CD4-positive, alpha-beta T cell (primary cell): ENCODE measurements at regions of chr12 and their contacts with region 1.

Region 1: DNA sequence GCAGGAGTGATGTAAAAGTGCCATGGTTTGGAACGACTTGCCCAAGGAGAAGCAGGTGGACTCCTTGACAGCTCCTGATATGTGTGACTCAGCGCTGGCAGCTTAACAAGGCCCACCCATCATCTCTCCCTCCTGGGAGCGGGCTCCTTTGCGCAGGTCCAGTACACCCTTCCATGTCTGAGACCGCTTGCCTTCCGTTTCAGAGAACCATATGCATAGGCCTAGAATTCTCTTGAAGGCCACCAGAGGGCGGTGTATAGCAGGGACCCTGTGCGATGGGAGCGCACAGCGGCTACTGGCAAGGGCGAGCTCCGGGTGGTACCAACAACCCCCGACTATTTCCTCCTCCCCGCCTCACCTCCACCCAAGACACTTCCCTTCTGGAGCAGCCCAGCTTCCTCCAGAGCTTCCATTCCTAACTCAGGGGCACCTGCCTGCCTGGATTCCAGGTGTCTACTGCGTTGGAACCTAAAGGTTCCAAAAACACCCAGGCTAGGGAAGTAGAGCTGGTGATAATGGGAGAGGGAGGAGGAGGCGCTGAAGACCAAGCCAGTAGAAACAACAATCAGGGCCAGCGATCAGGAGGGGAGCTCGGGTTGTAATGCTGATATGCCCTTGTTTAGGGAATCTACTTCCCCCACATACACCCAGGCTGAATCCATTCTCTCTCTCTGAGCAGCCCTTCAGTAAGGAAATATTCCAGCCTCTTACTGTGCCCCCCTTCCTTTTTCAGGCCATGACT is 6.2 kb downstream of the DHH start:
- DNase-seq: peak; percentile 43 to 90 (median 58)
- ATAC-seq: peak; percentile 82
- H3K4me3 ChIP-seq: no peak overlapping the region
- H3K4me3 Mint-ChIP-seq: peak overlapping the region; percentile 60
- H3K27ac ChIP-seq: no peak overlapping the region
- H3K27ac Mint-ChIP-seq: no peak overlapping the region
- H3K4me1 ChIP-seq: peaks cover 55% of the 10 kb centered on the region
- H3K4me1 Mint-ChIP-seq: peaks cover 52% of the 10 kb centered on the region
- H3K27me3 ChIP-seq: peaks cover 48 to 51% of the 10 kb centered on the region in 2 experiments
- H3K27me3 Mint-ChIP-seq: peaks cover 62% of the 10 kb centered on the region
- CTCF ChIP-seq: peak; percentile 85

Region 2: GRCh38 chr12:48995061-48995879 is 93.1 kb before region 1 on chr12:
- CTCF ChIA-PET with region 1: interaction called, 3 read pairs
- POLR2A ChIA-PET with region 1: no interaction called
- intact Hi-C with region 1: loop called in 1 of 2 experiments (anchors 2 kb)
- DNase-seq: peak in 7 of 14 experiments; percentile 40 to 73 (median 56)
- ATAC-seq: peak; percentile 28
- H3K4me3 ChIP-seq: no peak overlapping the region
- H3K4me3 Mint-ChIP-seq: peak overlapping the region; percentile 61
- H3K27ac ChIP-seq: no peak overlapping the region
- H3K27ac Mint-ChIP-seq: no peak overlapping the region
- H3K4me1 ChIP-seq: peaks cover 46% of the 10 kb centered on the region
- H3K4me1 Mint-ChIP-seq: peaks cover 44% of the 10 kb centered on the region
- H3K27me3 ChIP-seq: peaks cover 53 to 56% of the 10 kb centered on the region in 2 experiments
- H3K27me3 Mint-ChIP-seq: peaks cover 73% of the 10 kb centered on the region
- CTCF ChIP-seq: peak; percentile 83

Region 3: DNA sequence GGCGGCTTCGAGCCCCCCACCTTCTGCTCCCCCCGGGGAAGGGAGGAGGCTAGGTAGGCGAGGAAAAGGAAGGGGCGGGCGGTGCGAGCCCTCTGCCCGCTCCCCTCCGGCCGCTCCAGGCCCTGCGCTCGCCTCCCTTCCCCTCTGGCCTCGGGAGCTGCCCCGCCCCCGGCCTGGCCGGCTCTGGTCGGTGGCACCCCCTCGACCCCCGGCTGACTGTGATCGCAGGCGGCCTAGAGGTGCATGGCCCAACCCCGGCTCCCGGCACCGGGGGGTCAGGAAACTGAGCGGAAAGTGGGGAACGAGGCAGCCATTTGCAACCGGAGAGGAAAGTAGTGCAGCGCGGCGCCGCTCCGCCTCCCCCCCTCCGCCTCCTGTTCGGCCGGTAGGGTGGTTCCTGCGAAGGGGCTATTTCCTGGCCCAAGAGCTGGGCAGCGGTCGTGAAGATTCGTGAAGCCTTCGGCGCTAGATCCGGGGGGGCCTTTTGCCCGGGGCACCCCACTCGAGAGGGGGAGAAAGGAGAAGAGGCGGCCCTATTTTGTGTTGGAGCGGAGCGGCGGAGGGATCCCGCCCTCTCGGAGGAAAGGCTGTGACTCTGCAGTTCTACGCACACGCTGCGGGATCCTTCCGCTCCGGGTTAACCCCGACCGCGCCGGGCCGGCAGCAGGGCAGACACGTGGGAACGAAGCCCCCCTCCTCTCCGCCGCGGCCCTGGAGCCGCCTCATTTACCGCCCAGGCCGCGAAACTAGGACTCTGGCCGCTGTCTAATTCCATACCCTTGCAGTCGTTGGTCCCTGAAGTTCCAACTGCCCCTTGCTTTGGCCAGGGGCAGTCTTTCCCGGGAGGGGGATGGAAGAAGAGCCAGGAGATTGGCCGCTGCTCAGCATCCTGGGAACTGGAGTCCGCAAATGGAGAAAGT is 27.9 kb before region 1 on chr12 and contains the start of gene KMT2D:
- CTCF ChIA-PET with region 1: interaction called, 29 read pairs
- POLR2A ChIA-PET with region 1: interaction called, 12 read pairs
- intact Hi-C with region 1: loop called (anchors 2 kb)
- DNase-seq: peak; percentile 78 to 95 (median 86)
- ATAC-seq: peak; percentile 68
- H3K4me3 ChIP-seq: peak within 1 kb of the TSS; percentile 96
- H3K4me3 Mint-ChIP-seq: peak within 1 kb of the TSS; percentile 97
- H3K27ac ChIP-seq: peak within 1 kb of the TSS; percentile 90 to 93
- H3K27ac Mint-ChIP-seq: peak within 1 kb of the TSS; percentile 96
- H3K4me1 ChIP-seq: peaks cover 56% of the 10 kb centered on the region
- H3K4me1 Mint-ChIP-seq: peaks cover 55% of the 10 kb centered on the region
- H3K27me3 ChIP-seq: no peaks in the 10 kb centered on the region
- H3K27me3 Mint-ChIP-seq: no peaks in the 10 kb centered on the region
- CTCF ChIP-seq: no peak
- total RNA-seq, gene KMT2D: 107 to 110 TPM

Region 4: DNA sequence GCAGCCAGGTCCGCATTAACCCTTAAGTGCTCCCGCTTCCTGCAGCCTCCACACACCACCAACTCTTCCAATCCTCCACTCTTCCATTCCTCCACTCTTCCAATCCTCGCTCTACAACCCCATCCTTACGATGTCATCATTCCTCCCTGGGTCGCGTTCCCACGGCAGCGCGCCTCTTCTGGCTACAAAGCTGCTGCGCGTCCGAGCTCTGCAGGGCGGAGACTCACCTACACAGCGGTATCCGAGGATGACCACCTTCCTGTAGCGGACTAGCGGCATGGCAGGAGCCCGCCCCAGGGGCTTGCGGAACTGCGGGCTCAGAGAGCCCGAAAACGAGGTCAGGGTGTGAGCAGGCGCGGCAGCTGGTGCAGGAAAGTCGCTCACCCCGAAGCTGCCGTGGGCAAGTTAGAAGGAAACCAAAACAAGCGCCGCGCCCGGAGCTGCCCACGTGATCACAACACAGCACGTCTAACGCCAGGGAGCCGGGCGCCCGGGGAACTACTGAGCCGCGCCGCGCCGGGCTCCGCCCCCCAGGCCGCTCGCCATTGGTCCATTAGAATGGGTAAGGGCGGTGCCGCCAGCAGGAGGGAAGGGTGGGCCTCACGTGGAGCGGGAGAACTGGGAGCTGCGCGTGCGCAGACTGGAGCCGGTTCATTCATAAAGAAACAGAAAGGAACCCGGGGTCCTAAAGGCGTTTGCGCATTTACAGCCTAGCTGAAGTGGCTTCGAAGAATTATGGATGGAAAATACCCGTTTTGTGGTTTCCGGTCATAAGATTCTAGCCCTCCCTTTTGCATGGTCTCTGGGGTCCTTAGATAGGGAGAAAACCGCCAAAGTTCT is 18.6 kb before region 1 on chr12 and contains the start of gene RHEBL1:
- CTCF ChIA-PET with region 1: interaction called, 29 read pairs
- POLR2A ChIA-PET with region 1: interaction called, 15 read pairs
- intact Hi-C with region 1: loop called (anchors 2 kb)
- DNase-seq: peak; percentile 95 to 99 (median 97)
- ATAC-seq: peak; percentile 98
- H3K4me3 ChIP-seq: peak within 1 kb of the TSS; percentile 97
- H3K4me3 Mint-ChIP-seq: peak within 1 kb of the TSS; percentile 97
- H3K27ac ChIP-seq: peak within 1 kb of the TSS; percentile 61 to 76
- H3K27ac Mint-ChIP-seq: peak within 1 kb of the TSS; percentile 92
- H3K4me1 ChIP-seq: peaks cover 14% of the 10 kb centered on the region
- H3K4me1 Mint-ChIP-seq: peaks cover 21% of the 10 kb centered on the region
- H3K27me3 ChIP-seq: no peaks in the 10 kb centered on the region
- H3K27me3 Mint-ChIP-seq: peaks cover 3% of the 10 kb centered on the region
- CTCF ChIP-seq: no peak
- total RNA-seq, gene RHEBL1: 5.1 to 6.0 TPM

Region 5: GRCh38 chr12:49110464-49111155 is 22.2 kb after region 1 on chr12 and contains the start of gene LMBR1L:
- CTCF ChIA-PET with region 1: interaction called, 20 read pairs
- POLR2A ChIA-PET with region 1: interaction called, 37 read pairs
- intact Hi-C with region 1: no loop called
- DNase-seq: peak; percentile 92 to 99 (median 95)
- ATAC-seq: peak; percentile 91
- H3K4me3 ChIP-seq: peak within 1 kb of the TSS; percentile 75
- H3K4me3 Mint-ChIP-seq: peak within 1 kb of the TSS; percentile 89
- H3K27ac ChIP-seq: peak within 1 kb of the TSS; percentile 85 to 94
- H3K27ac Mint-ChIP-seq: peak within 1 kb of the TSS; percentile 97
- H3K4me1 ChIP-seq: peaks cover 41% of the 10 kb centered on the region
- H3K4me1 Mint-ChIP-seq: peaks cover 35% of the 10 kb centered on the region
- H3K27me3 ChIP-seq: no peaks in the 10 kb centered on the region
- H3K27me3 Mint-ChIP-seq: no peaks in the 10 kb centered on the region
- CTCF ChIP-seq: peak; percentile 61
- total RNA-seq, gene LMBR1L: 401 to 418 TPM

Region 6: DNA sequence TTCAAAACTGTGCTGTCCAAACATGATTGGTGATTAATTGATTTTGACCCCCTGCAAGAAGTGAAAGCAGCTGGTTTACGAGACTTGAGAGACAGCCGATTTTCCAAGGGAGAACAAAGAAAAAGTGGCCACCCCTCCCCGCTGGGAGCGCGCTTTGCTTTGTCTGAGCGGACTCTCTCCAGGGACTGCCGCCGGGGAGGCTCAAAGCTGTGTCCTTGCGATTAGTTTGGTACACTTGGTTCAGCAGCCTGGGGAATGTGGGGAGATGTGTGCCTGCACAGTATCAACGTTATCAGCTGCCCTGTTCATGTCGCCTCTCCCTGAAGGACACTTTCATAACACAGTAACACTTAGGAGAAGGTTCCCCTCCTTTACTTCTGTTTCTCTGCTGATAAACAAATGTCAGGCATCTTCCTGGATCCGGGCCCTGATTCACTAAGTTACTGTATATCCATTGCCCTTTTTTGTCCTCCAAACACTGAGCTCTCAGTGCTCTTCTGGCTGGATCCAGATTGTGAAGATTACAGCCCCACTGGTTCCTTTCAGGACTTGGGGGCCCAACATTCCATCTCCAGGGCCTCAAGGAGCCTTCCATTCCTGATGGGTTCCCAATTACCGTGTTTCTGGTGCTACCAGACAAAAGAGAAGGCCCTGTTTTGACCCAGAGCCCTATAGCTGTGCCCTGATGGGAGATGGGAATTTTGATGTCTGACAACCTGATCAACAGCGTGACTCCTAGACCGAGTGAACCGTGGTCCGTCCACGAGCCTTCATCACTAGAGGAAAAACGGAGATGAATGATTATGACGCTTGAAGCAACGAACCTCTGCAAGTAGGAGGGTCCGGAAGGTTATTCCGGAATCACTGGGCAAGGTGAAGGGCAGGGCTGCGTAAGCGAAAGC is 144.8 kb after region 1 on chr12:
- CTCF ChIA-PET with region 1: interaction called, 10 read pairs
- POLR2A ChIA-PET with region 1: interaction called, 15 read pairs
- intact Hi-C with region 1: loop called (anchors 1 kb)
- DNase-seq: no peak
- ATAC-seq: no peak
- H3K4me3 ChIP-seq: no peak overlapping the region
- H3K4me3 Mint-ChIP-seq: peak overlapping the region; percentile 67
- H3K27ac ChIP-seq: peak overlapping the region in 1 of 2 donors; percentile 26
- H3K27ac Mint-ChIP-seq: peak overlapping the region; percentile 79
- H3K4me1 ChIP-seq: peaks cover 17% of the 10 kb centered on the region
- H3K4me1 Mint-ChIP-seq: peaks cover 15% of the 10 kb centered on the region
- H3K27me3 ChIP-seq: no peaks in the 10 kb centered on the region
- H3K27me3 Mint-ChIP-seq: no peaks in the 10 kb centered on the region
- CTCF ChIP-seq: no peak

Region 7: DNA sequence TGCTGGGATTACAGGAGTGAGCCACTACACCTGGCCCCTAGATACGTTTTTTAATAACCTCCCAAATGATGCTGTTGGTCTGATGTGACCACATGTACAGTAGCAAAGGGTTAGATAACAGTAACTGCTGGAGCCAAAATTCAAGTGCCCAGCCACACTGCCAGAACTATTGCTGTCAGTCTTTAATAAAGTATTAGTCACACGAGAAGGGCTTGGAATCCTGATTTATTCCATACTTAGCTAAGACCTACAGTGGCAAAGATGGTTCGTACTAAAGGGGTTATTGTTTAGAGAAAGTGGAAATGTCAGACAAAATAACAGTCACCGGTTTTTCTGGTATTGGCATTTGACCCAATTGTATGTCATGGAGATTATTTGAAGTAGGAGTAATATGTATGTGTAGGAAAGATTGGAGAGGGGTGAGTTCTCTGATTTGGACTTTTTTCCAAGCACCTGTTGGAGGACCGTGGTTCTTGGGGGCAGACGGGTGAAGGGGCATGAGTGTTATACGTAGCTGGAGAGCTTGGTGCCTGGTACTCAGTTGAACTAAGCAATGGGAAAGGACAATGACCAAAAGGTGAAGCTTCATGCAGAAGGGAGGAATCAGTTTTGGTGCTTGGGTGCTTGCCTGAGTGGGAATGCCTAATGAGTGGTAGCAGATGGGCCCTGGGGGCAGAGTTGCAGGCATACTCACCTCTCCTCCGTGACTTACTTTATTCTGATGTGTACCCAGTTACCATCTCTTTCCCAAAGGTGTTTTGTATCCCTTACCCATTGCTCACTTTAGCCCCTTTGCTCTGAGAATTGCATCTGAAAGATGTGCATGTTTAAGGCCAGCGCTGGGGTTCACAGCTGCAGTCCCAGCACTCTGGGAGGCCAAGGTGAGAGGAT is 186.3 kb after region 1 on chr12:
- CTCF ChIA-PET with region 1: no interaction called
- POLR2A ChIA-PET with region 1: no interaction called
- intact Hi-C with region 1: no loop called
- DNase-seq: no peak
- ATAC-seq: no peak
- H3K4me3 ChIP-seq: no peak overlapping the region
- H3K4me3 Mint-ChIP-seq: no peak overlapping the region
- H3K27ac ChIP-seq: no peak overlapping the region
- H3K27ac Mint-ChIP-seq: no peak overlapping the region
- H3K4me1 ChIP-seq: no peaks in the 10 kb centered on the region
- H3K4me1 Mint-ChIP-seq: no peaks in the 10 kb centered on the region
- H3K27me3 ChIP-seq: no peaks in the 10 kb centered on the region
- H3K27me3 Mint-ChIP-seq: peaks cover 4% of the 10 kb centered on the region
- CTCF ChIP-seq: no peak